Activated CD4-positive, alpha-beta memory T cell treated with anti-CD3 and anti-CD28 coated beads, Interleukin-2, amount 10 ng/mL, durations not matched to agents 7 days and 5 days (primary cell): ENCODE measurements at regions of chr12 and their contacts with region 1.

Region 1: DNA sequence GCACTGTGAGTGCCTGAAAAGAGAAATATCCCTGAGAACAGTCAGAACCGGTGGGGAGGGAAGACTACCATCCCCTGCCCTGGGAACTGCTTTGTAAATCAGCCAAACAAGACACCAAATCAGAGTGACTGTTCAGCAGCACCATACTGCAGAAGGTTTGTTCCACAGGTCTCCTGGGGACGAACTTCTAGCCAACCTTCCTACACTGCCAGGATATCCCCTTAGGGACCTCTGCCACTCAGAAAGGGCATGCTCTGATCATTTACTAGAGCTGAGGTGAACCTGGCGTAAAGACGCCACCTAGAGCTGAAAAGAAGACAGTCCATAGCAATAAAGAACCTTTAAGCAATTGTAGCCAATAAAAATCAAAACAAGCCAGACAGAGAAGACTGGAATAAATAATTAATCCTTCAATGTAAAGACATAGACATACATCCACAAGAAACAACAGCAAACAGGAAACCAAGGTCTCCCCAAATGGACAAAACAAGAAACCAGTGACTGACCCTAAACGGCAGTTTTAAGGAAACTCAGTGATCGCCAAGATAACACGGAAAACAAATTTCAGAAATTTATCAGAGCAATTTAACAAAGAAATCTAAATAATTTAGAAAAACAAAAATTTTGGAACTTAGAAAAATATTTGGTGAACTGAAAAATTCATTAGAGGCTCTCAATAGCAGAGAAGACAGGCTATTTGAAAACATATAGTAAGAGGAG is 228.1 kb upstream of the AMIGO2 start:
- DNase-seq: peak; percentile 64
- H3K4me3 Mint-ChIP-seq: peak overlapping the region; percentile 76
- H3K27ac Mint-ChIP-seq: peak overlapping the region; percentile 87
- H3K4me1 Mint-ChIP-seq: peaks cover 38% of the 10 kb centered on the region
- H3K27me3 Mint-ChIP-seq: no peaks in the 10 kb centered on the region

Region 2: GRCh38 chr12:47032644-47033043 is 275.2 kb before region 1 on chr12:
- CTCF ChIA-PET with region 1: interaction called, 27 read pairs
- POLR2A ChIA-PET with region 1: interaction called, 14 read pairs
- DNase-seq: no peak
- H3K4me3 Mint-ChIP-seq: no peak overlapping the region
- H3K27ac Mint-ChIP-seq: no peak overlapping the region
- H3K4me1 Mint-ChIP-seq: peaks cover 9% of the 10 kb centered on the region
- H3K27me3 Mint-ChIP-seq: peaks cover 5% of the 10 kb centered on the region

Region 3: GRCh38 chr12:47079468-47079980 is 228.3 kb before region 1 on chr12 and contains the starts of genes AMIGO2 and PCED1B:
- CTCF ChIA-PET with region 1: interaction called, 15 read pairs
- POLR2A ChIA-PET with region 1: interaction called, 27 read pairs
- DNase-seq: peak; percentile 68
- H3K4me3 Mint-ChIP-seq: peak within 1 kb of the TSS; percentile 92
- H3K27ac Mint-ChIP-seq: peak within 1 kb of the TSS; percentile 79
- H3K4me1 Mint-ChIP-seq: peaks cover 67% of the 10 kb centered on the region
- H3K27me3 Mint-ChIP-seq: no peaks in the 10 kb centered on the region
- total RNA-seq, gene AMIGO2: 6.6 to 7.1 TPM
- total RNA-seq, gene PCED1B: 57.1 to 62.2 TPM

Region 4: DNA sequence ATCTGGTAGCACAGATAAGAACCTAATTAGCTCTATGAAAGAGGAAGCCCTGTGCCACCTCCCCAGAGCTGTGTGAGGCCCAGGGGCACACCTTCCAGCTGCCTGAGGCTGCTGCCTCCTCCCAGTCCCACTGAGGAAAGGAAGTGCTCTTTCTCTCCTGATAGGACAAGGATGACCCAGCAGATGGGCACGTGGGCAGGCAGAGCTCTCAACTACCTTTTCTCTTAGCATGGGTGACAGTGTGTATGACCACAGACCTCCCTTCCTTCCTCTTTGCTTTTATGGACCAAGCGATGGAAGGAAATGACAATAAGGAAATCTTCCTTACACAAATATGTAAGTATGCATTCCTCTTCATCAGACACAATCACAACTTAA is 100.5 kb before region 1 on chr12:
- CTCF ChIA-PET with region 1: interaction called, 16 read pairs
- POLR2A ChIA-PET with region 1: interaction called, 21 read pairs
- DNase-seq: peak; percentile 71
- H3K4me3 Mint-ChIP-seq: peak overlapping the region; percentile 60
- H3K27ac Mint-ChIP-seq: peak overlapping the region; percentile 89
- H3K4me1 Mint-ChIP-seq: peaks cover 70% of the 10 kb centered on the region
- H3K27me3 Mint-ChIP-seq: no peaks in the 10 kb centered on the region

Region 5: GRCh38 chr12:47216150-47216677 is 91.6 kb before region 1 on chr12:
- CTCF ChIA-PET with region 1: interaction called, 17 read pairs
- POLR2A ChIA-PET with region 1: interaction called, 53 read pairs
- DNase-seq: peak; percentile 87
- H3K4me3 Mint-ChIP-seq: peak overlapping the region; percentile 85
- H3K27ac Mint-ChIP-seq: peak overlapping the region; percentile 97
- H3K4me1 Mint-ChIP-seq: peaks cover 37% of the 10 kb centered on the region
- H3K27me3 Mint-ChIP-seq: no peaks in the 10 kb centered on the region

Region 6: DNA sequence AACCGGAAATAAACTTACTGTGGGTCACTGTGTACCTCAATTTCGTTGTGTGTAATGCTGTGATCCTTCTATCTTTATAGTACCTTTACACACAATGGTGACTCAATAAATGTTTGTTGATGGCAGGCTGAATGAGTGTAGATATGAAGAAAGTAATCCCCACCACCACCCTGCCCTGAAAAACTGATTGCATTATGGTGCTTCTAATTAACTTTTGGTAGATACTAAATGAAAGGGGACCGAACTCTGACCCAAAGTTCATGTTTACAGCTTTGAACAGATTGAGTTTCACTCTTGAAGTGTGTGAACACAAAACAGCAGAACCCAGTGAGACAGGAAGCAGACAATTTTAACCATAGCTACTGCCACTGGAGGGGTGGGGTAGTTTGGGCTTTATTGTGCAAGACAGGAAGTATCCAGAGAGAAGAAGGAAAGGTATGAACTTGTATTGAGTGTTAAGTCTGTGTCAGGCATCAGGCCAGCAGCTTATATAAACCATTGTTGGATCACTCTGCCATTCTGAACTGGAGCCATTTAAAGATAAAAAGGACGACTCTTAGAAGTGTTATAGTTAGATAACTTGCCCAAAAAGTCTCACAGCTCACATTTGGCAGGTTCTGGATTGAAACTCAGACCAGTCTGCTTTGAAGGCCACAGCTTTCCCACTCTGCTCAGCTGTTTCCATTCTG is 31.1 kb before region 1 on chr12:
- CTCF ChIA-PET with region 1: interaction called, 10 read pairs
- POLR2A ChIA-PET with region 1: interaction called, 18 read pairs
- DNase-seq: peak; percentile 73
- H3K4me3 Mint-ChIP-seq: peak overlapping the region; percentile 48
- H3K27ac Mint-ChIP-seq: peak overlapping the region; percentile 87
- H3K4me1 Mint-ChIP-seq: peaks cover 55% of the 10 kb centered on the region
- H3K27me3 Mint-ChIP-seq: no peaks in the 10 kb centered on the region

Region 7: DNA sequence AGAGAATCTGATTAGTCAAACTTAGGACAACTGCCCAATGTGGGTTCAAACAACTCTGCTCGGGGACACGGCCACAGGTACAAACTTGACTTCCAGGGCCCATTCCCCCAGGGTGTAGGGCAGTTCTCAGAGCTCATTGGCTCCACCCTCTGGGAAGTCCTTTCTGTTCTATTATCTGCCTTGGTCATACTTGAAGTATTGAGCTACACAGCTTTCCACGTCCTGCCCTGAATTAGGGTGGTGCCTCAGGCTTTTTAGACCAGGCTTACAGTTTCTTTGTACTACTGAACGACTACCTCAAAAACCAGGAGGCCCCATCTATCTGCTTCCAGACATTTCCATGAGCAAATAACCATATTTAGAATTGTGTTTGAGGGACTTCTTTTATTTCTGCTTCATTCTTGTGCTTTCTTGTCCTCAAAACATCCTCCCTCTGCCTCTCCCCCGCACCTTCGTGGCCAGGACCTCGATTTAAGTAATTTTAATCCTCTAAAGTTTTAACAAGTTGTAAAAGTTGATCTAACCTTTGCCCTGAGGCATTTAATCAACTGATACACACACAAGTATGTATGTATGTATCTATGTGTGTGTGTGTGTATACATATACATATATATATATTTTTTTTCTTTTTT is 53.7 kb after region 1 on chr12:
- CTCF ChIA-PET with region 1: no interaction called
- POLR2A ChIA-PET with region 1: interaction called, 20 read pairs
- DNase-seq: peak; percentile 68
- H3K4me3 Mint-ChIP-seq: peak overlapping the region; percentile 76
- H3K27ac Mint-ChIP-seq: peak overlapping the region; percentile 100
- H3K4me1 Mint-ChIP-seq: peaks cover 60% of the 10 kb centered on the region
- H3K27me3 Mint-ChIP-seq: no peaks in the 10 kb centered on the region